Activated B cell treated with CpG ODN at 0.5 μM for 24 hours (primary cell): ENCODE measurements at regions of chr19 and their contacts with region 1.

Region 1: GRCh38 chr19:48588670-48589399 is 17.7 kb upstream of the SPACA4 start:
- DNase-seq: peak; percentile 84
- ATAC-seq: peak; percentile 93
- H3K4me3 Mint-ChIP-seq: peak overlapping the region; percentile 80
- H3K27ac Mint-ChIP-seq: no peak overlapping the region
- H3K4me1 Mint-ChIP-seq: peaks cover 15% of the 10 kb centered on the region
- H3K27me3 Mint-ChIP-seq: peaks cover 9% of the 10 kb centered on the region
- CTCF ChIP-seq: peak; percentile 58

Region 2: DNA sequence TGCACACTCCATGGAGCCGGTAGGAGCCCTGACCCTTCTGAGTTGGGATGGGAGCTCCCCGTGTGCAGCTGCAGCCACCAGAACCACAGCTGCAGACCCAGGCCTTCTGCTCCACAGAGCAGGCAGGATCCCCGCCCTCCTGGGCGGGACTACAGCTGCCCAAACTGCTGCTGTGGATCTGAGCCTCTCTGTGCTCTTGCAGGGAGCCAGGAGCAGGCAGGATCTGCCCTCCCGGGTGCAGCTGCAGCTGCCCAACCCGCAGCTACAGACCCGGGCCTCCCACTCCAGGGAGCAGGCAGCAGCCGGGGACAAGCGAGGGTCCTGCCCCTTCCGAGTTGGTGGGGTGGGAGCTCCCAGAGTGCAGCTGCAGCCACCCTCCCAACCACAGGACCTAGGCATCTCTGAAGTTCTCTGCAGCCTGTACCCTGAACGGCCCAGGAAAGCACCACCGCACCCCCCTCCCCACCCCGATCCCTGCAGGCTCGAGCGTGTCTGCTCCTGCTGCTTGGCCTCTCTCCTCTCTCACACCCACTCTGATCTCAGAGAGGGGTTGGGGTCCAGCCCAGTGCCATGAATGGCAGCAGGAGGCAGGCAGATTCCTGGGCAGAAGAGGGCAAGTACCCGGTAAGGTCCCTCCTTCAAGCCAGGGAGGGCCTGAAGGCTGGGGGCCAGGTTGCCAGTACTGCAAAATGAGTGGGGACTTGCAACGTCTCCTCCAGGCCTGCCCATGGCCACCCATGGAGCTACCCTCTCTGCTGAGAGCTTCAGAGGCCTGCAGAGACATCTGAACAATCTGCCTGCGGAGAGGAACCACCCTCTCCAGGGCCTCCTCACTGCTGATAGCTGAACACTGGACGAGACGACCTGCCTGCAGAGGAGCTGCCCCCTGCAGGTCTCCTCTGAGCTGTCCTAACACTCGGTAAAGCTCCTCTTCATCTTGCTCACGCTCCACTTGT is 279.9 kb before region 1 on chr19:
- CTCF ChIA-PET with region 1: interaction called, 4 read pairs
- POLR2A ChIA-PET with region 1: no interaction called
- intact Hi-C with region 1: loop called (anchors 1 kb)
- DNase-seq: no peak
- ATAC-seq: no peak
- H3K4me3 Mint-ChIP-seq: no peak overlapping the region
- H3K27ac Mint-ChIP-seq: no peak overlapping the region
- H3K4me1 Mint-ChIP-seq: no peaks in the 10 kb centered on the region
- H3K27me3 Mint-ChIP-seq: peaks cover 4% of the 10 kb centered on the region
- CTCF ChIP-seq: no peak

Region 3: DNA sequence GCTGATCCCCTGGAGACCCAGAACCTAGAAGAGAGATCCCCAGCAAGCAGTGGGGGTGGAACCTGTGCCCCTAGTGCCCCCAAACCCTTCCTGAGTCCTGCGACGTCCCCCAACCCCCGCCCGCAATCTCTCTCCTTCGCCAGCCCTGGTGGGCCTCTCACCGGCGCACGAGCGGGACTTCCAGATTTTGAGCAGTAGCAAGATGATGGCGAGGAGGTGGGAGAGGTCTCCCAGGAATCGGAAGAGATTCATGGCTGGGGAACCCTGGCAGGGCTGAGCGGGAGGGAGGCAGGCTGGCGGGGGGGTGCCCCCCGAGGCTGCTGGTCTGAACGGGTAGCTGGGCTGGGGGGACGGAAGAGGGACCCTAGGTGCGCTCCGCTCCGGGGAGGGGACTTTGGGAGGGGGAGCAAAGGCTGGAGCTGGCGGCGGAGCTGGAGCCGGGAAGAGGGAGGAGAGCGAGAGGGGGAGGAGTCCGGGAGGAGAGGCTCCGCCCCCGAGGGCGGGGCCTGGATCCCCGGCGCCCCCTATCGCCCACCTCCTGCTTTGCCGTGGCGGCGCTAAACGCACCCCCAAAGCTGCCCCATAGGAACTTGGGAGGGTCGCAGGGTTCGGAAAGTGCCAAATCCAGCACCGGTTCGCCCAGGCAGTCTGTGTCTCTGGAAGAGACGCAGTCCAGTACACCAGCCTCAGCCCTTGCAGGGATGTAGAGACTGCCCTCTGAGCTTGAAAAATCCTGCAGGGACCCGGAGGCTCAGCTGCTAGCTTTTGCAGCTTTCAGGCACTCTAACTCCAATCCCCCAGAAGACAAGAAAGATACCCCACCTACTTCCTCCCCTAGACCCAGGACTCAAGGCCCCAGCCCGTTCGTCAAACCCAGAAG is 197.5 kb before region 1 on chr19 and contains the start of gene KDELR1:
- CTCF ChIA-PET with region 1: interaction called, 11 read pairs
- POLR2A ChIA-PET with region 1: no interaction called
- intact Hi-C with region 1: loop called (anchors 1 kb)
- DNase-seq: peak; percentile 83
- ATAC-seq: peak; percentile 84
- H3K4me3 Mint-ChIP-seq: peak within 1 kb of the TSS; percentile 96
- H3K27ac Mint-ChIP-seq: peak within 1 kb of the TSS; percentile 88
- H3K4me1 Mint-ChIP-seq: peaks cover 35% of the 10 kb centered on the region
- H3K27me3 Mint-ChIP-seq: peaks cover 19% of the 10 kb centered on the region
- CTCF ChIP-seq: peak; percentile 51
- total RNA-seq, gene KDELR1: 50.8 and 51.9 TPM in 2 replicates

Region 4: GRCh38 chr19:48501496-48502350 is 87.1 kb before region 1 on chr19:
- CTCF ChIA-PET with region 1: interaction called, 24 read pairs
- POLR2A ChIA-PET with region 1: interaction called, 4 read pairs
- intact Hi-C with region 1: loop called (anchors 1 kb)
- DNase-seq: no peak
- ATAC-seq: peak; percentile 64
- H3K4me3 Mint-ChIP-seq: peak overlapping the region; percentile 65
- H3K27ac Mint-ChIP-seq: no peak overlapping the region
- H3K4me1 Mint-ChIP-seq: peaks cover 24% of the 10 kb centered on the region
- H3K27me3 Mint-ChIP-seq: peaks cover 15% of the 10 kb centered on the region
- CTCF ChIP-seq: no peak

Region 5: DNA sequence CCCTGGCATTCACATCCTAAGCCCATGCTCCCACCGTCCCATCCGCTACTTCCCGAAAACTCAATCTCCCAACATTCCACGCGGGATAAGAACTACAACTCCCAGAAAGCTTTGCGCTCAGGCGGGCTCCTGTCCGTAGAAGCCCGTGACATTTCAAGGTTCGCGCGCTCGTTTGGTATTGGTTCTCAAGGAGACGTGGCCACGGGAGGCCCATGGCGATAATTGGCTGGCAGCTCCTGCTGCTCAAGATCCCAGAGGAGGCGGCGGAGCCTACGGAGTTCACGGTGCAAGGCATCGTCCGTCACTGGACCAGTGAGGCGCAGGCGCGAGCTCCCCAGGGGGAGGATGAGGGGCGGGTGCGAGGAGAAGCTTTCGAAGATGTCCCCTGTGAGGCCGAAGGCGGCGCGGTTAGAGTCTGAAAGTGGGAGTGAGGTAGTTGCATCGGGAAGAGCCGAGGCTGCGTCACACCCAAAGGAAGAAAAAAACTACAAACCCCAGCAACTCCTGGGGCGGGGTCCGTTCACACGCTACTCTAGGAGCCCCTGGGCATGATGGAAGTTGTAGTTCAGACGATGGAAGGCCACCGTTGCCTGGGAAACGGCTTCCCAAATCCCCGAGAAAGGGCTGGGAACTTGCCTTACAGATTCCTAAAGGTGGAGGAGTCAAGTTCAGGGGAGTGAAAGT is 131.9 kb after region 1 on chr19:
- CTCF ChIA-PET with region 1: no interaction called
- POLR2A ChIA-PET with region 1: no interaction called
- intact Hi-C with region 1: no loop called
- DNase-seq: peak; percentile 81
- ATAC-seq: peak; percentile 86
- H3K4me3 Mint-ChIP-seq: peak overlapping the region; percentile 95
- H3K27ac Mint-ChIP-seq: peak overlapping the region; percentile 92
- H3K4me1 Mint-ChIP-seq: peaks cover 24% of the 10 kb centered on the region
- H3K27me3 Mint-ChIP-seq: no peaks in the 10 kb centered on the region
- CTCF ChIP-seq: no peak